ENCODE measurements at regions of chr5 and their contacts with region 1.

Region 1: GRCh38 chr5:39331861-39332381 is 32.4 kb downstream of the C9 start:
- DNase-seq: no peak
- H3K4me3 ChIP-seq: no peak overlapping the region
- H3K27ac ChIP-seq: no peak overlapping the region
- H3K4me1 ChIP-seq: no peaks in the 10 kb centered on the region
- H3K27me3 ChIP-seq: no peaks in the 10 kb centered on the region
- CTCF ChIP-seq: no peak

Region 2: DNA sequence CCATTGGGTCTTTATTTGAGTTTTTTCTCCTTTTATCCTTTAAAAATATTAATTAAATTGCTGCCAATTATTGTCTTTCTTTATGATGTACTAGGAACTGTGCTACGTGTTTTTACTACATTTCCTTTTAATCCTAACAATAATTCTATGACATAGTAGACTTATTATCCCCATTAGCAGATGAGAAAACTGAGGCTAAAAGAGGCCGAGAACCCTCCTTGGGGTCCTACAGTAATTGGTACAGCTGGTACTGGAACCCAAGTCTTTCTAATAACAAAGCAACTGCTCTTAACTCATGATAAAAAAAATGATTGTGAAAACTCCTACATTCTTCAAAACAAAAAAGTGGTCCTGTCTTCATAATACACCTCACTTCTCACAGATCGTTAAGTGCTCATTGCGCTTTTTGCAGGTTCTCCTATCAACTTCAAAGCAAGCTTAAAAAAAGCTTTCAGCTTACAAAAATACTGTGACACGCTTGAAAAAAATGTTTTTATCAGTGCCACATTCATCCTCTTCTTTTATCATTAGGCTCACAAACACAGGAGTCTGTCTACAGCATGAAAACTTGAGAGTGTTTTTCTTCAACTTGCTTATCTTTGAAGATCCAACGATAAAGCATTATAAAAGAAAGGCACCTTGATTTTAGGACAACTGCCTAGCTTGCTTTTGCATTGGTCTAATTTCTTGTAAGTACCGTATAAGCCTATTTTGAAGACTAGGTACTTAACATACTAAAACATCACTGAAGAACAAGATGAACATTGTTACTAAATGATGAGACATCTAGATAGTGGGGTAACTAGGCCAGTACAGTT is 145.0 kb before region 1 on chr5:
- CTCF ChIA-PET with region 1: interaction called, 11 read pairs
- POLR2A ChIA-PET with region 1: no interaction called
- intact Hi-C with region 1: no loop called
- DNase-seq: no peak
- H3K4me3 ChIP-seq: no peak overlapping the region
- H3K27ac ChIP-seq: no peak overlapping the region
- H3K4me1 ChIP-seq: peaks cover 6% of the 10 kb centered on the region; the same call in 1 of the 2 replicates
- H3K27me3 ChIP-seq: no peaks in the 10 kb centered on the region
- CTCF ChIP-seq: no peak